Activated CD4-positive, alpha-beta memory T cell treated with anti-CD3 and anti-CD28 coated beads for 36 hours (primary cell): ENCODE measurements at regions of chr15 and their contacts with region 1.

Region 1: DNA sequence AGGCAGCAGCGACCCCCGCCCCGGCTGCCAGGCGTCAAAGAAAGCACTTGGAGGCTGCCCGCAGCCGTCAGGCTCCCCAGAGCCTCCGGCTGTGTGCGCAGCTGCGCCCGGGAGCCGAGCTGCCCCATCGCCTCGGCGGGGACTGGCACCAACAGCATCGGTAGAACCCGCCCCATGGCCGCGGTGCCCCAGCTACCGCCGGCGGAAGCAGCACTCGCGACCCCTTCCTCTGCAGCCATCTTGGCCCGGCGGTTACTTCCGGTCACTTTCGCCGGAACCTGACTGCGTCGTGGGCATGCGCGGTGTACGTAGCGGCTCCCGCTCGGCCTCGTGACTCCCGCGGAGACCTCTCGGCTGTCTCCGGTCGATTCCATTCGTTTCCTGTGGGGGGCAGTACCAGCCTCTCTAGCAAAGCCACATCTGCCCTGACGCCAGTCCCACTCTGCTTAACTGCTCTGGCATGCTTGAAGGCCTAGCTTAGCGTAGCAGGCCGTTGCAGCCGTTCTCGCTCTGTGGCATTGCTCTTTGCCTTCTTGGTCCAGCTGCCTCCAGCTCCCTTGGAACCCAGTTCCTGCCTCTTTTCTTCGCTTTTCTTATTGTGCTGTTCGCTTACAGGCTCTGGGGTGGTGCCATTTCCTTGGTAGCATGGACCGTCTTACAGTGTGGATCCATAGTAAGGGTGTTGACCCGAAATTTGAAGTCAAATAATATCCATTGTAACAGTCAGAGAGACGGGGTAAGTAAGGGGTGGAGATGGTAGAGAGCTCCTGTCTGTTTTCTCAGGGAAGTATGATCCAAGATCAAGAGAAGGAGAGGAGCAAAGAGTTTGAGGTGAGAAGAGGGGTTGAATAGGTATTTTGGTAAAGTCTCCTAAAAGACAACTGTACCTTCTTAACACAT is at the start of gene SPG11:
- DNase-seq: peak; percentile 99
- H3K4me3 Mint-ChIP-seq: peak within 1 kb of the TSS; percentile 97
- H3K27ac Mint-ChIP-seq: peak within 1 kb of the TSS; percentile 97
- H3K4me1 Mint-ChIP-seq: peaks cover 58% of the 10 kb centered on the region
- H3K27me3 Mint-ChIP-seq: no peaks in the 10 kb centered on the region
- total RNA-seq, gene SPG11: 84.6 to 86.8 TPM

Region 2: GRCh38 chr15:44482088-44482487 is 181.6 kb before region 1 on chr15:
- CTCF ChIA-PET with region 1: no interaction called
- POLR2A ChIA-PET with region 1: no interaction called
- intact Hi-C with region 1: no loop called
- DNase-seq: no peak
- H3K4me3 Mint-ChIP-seq: no peak overlapping the region
- H3K27ac Mint-ChIP-seq: no peak overlapping the region
- H3K4me1 Mint-ChIP-seq: peaks cover 28% of the 10 kb centered on the region
- H3K27me3 Mint-ChIP-seq: no peaks in the 10 kb centered on the region

Region 3: GRCh38 chr15:44584162-44584749 is 79.4 kb before region 1 on chr15:
- CTCF ChIA-PET with region 1: interaction called, 14 read pairs
- POLR2A ChIA-PET with region 1: no interaction called
- intact Hi-C with region 1: no loop called
- DNase-seq: peak; percentile 76
- H3K4me3 Mint-ChIP-seq: no peak overlapping the region
- H3K27ac Mint-ChIP-seq: no peak overlapping the region
- H3K4me1 Mint-ChIP-seq: no peaks in the 10 kb centered on the region
- H3K27me3 Mint-ChIP-seq: no peaks in the 10 kb centered on the region

Region 4: GRCh38 chr15:44593042-44593736 is 70.5 kb before region 1 on chr15:
- CTCF ChIA-PET with region 1: interaction called, 5 read pairs
- POLR2A ChIA-PET with region 1: no interaction called
- intact Hi-C with region 1: loop called (anchors 2 kb)
- DNase-seq: peak; percentile 18
- H3K4me3 Mint-ChIP-seq: no peak overlapping the region
- H3K27ac Mint-ChIP-seq: no peak overlapping the region
- H3K4me1 Mint-ChIP-seq: peaks cover 24% of the 10 kb centered on the region
- H3K27me3 Mint-ChIP-seq: no peaks in the 10 kb centered on the region

Region 5: GRCh38 chr15:44633603-44634002 is 30.1 kb before region 1 on chr15:
- CTCF ChIA-PET with region 1: interaction called, 10 read pairs
- POLR2A ChIA-PET with region 1: interaction called, 8 read pairs
- intact Hi-C with region 1: loop called (anchors 1 kb)
- DNase-seq: peak; percentile 18
- H3K4me3 Mint-ChIP-seq: peak overlapping the region; percentile 70
- H3K27ac Mint-ChIP-seq: peak overlapping the region; percentile 96
- H3K4me1 Mint-ChIP-seq: peaks cover 23% of the 10 kb centered on the region
- H3K27me3 Mint-ChIP-seq: no peaks in the 10 kb centered on the region

Region 6: GRCh38 chr15:44676676-44677075 is 13.0 kb after region 1 on chr15:
- CTCF ChIA-PET with region 1: interaction called, 42 read pairs
- POLR2A ChIA-PET with region 1: interaction called, 43 read pairs
- intact Hi-C with region 1: loop called (anchors 1 kb)
- DNase-seq: peak; percentile 77
- H3K4me3 Mint-ChIP-seq: peak overlapping the region; percentile 74
- H3K27ac Mint-ChIP-seq: peak overlapping the region; percentile 95
- H3K4me1 Mint-ChIP-seq: peaks cover 83% of the 10 kb centered on the region
- H3K27me3 Mint-ChIP-seq: no peaks in the 10 kb centered on the region

Region 7: DNA sequence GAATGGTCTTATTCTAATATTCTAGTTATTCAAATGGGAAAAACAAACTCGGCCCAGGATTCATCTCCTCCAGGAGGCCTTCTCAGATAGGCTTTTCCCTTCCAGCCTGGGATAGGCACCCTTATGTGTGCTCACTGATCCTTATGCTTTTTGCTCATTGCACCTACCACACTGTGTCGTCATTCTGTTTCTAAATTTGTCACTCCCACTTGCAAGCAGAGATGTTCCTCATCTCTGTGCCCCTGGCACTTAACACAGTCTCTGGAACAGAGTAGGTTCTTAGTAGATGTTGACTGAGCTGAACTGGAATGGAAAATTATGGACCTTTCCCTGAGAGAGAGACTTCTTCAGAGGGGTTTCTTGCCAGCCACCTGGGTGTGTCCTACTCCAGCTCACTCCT is 18.6 kb after region 1 on chr15:
- CTCF ChIA-PET with region 1: interaction called, 42 read pairs
- POLR2A ChIA-PET with region 1: interaction called, 43 read pairs
- intact Hi-C with region 1: loop called (anchors 1 kb)
- DNase-seq: peak; percentile 32
- H3K4me3 Mint-ChIP-seq: peak overlapping the region; percentile 68
- H3K27ac Mint-ChIP-seq: peak overlapping the region; percentile 94
- H3K4me1 Mint-ChIP-seq: peaks cover 73% of the 10 kb centered on the region
- H3K27me3 Mint-ChIP-seq: no peaks in the 10 kb centered on the region